ENCODE measurements at regions of chr11 and their contacts with region 1.

Region 1: DNA sequence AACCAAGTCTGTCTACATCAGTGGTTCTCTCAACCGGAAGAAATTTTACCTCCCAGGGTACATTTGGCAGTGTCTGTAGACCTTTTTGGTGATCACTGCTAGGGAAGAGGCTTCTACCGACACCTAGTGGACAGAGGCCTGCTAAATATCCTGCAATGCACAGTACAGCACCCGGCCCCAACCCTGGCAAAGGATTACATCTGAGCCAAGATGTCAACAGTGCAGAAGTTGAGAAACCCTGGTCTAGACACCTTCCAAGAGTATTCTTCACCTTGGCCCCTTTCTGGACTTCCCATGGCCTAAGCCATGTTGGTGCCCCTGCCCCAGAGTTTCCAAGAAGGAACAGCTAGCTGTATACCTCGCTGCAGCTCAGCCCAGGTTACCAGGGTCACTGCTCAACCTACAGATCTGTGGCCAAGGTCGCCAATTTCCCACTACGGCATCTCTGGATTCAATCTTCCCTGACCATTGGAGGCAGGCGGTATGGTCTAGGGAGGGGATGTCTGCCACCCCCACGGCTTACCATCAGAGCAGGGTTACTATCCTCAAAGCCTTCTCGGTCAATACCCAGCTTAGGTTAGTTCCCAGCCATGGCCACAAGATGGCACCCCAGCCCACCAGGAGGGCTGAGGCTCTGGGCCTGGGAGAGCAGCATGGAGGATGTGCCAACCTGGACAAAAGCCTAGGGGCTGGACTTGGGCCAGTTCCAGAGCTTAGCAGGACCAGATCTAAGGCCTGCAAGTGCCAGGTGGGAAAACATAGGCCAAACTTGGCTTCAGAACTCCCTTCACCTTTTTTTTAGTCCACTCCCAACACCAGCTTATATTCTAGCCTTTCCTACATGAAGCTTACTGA is 3.7 kb upstream of the KCNC1 start:
- H3K4me3 ChIP-seq: no peak overlapping the region
- H3K27ac ChIP-seq: no peak overlapping the region
- H3K4me1 ChIP-seq: no peaks in the 10 kb centered on the region
- CTCF ChIP-seq: peak; percentile 78

Region 2: DNA sequence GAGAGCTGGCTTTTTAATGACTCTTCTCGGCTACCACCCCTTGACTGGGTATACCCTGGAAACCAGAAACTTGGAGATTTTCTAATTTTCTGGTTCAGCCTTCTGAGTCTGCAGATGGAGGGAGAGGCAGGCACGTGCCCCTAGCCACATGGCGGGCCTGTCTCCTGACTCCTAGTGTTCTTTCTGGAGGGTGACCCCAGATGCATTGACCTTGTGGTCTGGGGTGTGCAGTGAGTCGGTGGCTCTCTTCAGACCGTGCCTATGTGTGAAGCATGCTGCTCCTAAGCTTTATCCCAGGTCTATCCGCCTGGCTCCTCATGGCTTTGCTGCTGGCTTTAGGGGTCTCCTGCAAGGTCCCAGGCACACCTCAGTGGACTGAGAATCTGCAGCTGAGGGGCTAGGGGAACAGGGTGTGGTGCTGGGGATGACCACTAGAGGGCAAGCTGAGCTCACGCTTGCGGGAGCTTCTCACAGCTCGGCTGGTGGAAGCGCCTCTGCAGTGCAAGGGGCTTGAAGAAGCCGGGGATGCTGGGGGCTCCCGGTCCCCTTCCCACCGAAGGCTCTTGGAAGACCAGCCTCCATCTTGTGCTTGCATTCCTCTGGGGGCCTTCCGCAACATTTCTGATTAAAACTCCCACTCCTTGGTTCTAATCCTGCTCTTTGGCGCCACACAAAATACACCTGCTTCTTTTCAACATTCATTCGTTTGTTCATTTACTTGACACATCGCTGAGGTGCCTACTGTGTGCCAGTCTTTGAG is 132.0 kb before region 1 on chr11:
- CTCF ChIA-PET with region 1: interaction called, 102 read pairs
- POLR2A ChIA-PET with region 1: interaction called, 6 read pairs
- H3K4me3 ChIP-seq: no peak overlapping the region
- H3K27ac ChIP-seq: no peak overlapping the region
- H3K4me1 ChIP-seq: no peaks in the 10 kb centered on the region
- CTCF ChIP-seq: peak; percentile 72

Region 3: DNA sequence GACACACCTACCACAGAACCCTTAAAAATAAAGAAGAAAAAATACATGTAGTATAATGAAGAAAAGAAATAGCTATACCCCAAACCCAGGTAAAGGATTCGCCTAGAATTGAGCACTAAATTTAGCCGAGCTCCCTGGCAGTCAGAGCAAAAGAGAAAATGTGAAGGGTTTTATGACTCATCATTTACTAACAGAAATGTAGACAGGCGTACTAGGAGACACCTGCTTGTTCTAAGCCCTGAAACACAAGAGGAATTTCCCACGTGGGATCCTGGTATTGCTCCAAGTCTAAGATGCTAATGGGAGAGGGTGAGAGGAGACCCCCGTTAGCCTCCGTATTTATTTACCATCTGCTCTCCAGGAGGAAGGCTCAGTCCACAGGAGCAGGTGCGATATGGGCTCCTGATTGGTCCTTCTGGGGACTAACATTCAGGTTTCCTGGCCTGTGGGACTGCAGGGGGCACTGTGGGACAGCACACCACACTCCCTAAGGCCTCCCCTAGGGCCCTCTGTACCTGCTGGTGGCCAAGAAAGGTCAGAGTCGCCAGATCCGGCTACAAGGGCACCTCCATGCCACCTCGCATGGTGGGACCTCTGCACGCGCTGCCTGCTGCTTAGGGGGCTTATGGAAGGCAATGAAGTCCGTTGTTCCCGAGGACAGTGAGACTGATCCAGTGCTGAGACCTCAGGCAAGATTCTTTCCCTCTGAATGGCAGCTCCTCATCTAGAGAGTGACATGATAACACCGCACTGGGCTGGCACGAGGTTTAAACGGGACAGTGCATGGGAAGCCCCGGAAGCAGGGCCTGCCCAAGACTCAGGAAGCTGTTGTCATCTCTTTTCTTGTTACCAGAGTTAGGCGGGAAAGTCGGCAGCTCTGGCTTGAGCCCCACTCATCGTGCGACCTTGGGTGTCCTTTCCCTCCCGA is 29.5 kb after region 1 on chr11:
- CTCF ChIA-PET with region 1: interaction called, 25 read pairs
- POLR2A ChIA-PET with region 1: no interaction called
- H3K4me3 ChIP-seq: no peak overlapping the region
- H3K27ac ChIP-seq: no peak overlapping the region
- H3K4me1 ChIP-seq: no peaks in the 10 kb centered on the region
- CTCF ChIP-seq: no peak

Region 4: DNA sequence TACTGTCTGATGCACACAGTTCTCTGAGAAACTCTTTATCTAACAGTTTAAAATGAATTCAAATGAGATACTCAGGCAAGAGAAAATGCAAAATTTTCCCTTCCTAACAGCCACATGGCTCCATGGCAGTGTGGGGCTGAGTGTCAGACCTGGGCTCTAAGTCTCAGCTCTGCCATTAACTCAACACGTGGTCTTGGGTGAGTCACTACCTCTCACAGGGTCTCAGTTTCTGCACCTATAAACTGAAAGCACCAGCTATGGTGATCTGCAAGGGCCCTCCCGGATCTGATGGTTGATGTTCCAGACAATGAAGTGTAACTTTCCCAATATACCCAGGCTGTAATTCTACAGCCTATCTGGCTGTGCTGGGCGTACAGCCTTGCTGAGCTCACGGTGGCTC is 74.2 kb after region 1 on chr11:
- CTCF ChIA-PET with region 1: no interaction called
- POLR2A ChIA-PET with region 1: no interaction called
- H3K4me3 ChIP-seq: no peak overlapping the region
- H3K27ac ChIP-seq: no peak overlapping the region
- H3K4me1 ChIP-seq: no peaks in the 10 kb centered on the region
- CTCF ChIP-seq: no peak

Region 5: DNA sequence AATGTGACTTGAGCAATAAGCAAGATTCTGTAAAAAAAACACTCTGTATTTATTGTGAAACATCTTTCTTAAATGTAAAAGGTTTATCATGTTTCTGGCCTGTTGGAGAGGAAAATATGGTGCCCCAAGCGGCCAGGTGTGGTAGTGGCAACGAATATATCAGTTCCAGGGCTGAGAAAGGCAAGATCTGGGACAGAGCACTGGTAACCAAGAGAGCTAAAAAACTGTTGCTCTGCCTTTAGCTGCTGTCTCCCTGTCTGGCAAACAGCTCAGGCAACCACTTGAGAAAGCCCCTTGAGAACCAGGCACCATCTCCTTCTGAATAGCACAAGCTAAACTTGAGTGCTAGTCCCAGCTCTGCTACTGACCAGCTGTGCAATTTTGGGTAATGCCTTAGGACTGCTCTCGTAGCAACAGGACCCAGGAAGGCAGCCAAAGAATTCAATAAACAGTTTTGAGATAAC is 133.7 kb after region 1 on chr11:
- CTCF ChIA-PET with region 1: interaction called, 14 read pairs
- POLR2A ChIA-PET with region 1: no interaction called
- H3K4me3 ChIP-seq: no peak overlapping the region
- H3K27ac ChIP-seq: no peak overlapping the region
- H3K4me1 ChIP-seq: no peaks in the 10 kb centered on the region
- CTCF ChIP-seq: no peak

Region 6: GRCh38 chr11:17932472-17932871 is 201.6 kb after region 1 on chr11:
- CTCF ChIA-PET with region 1: interaction called, 13 read pairs
- POLR2A ChIA-PET with region 1: no interaction called
- H3K4me3 ChIP-seq: no peak overlapping the region
- H3K27ac ChIP-seq: no peak overlapping the region
- H3K4me1 ChIP-seq: no peaks in the 10 kb centered on the region
- CTCF ChIP-seq: no peak

Region 7: DNA sequence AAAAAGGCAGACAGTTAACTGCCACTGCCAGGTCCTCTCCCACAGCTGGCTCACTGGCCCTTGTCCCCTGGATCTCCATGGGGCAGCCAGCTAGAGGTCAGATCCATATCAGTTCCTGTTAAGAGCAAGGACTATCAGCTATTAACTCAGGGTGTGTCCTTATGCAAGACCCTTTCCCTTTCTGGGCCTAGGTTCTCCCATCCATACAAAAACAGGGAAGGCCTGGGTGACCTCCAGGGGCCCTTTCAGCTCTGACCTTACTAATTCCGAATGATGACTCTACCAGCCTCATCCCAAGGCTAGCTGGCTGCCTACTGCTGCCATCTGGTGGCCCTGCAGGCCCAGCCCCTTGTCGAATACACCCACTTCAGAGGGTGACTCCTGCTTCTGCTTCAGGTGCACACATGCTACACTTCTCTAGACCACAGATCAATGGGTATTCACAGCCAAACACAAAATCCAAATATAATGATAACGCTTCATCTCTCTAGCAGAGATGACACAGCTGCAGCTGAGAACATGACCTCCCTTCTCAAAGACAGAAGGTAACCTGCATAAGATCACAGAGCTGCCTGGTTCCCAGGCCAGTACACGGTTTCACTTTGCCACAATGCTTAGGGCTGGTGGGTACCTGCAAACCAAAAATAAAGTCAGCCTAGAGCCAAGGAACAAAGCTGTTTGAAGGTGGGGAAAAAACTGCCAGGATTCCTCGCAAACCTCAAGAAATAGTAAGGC is 247.9 kb after region 1 on chr11:
- CTCF ChIA-PET with region 1: interaction called, 357 read pairs
- POLR2A ChIA-PET with region 1: interaction called, 4 read pairs
- H3K4me3 ChIP-seq: no peak overlapping the region
- H3K27ac ChIP-seq: no peak overlapping the region
- H3K4me1 ChIP-seq: no peaks in the 10 kb centered on the region
- CTCF ChIP-seq: peak; percentile 49

Measured in HEK293 (cell line).